ENCODE measurements at regions of chr12 and their contacts with region 1.

Region 1: DNA sequence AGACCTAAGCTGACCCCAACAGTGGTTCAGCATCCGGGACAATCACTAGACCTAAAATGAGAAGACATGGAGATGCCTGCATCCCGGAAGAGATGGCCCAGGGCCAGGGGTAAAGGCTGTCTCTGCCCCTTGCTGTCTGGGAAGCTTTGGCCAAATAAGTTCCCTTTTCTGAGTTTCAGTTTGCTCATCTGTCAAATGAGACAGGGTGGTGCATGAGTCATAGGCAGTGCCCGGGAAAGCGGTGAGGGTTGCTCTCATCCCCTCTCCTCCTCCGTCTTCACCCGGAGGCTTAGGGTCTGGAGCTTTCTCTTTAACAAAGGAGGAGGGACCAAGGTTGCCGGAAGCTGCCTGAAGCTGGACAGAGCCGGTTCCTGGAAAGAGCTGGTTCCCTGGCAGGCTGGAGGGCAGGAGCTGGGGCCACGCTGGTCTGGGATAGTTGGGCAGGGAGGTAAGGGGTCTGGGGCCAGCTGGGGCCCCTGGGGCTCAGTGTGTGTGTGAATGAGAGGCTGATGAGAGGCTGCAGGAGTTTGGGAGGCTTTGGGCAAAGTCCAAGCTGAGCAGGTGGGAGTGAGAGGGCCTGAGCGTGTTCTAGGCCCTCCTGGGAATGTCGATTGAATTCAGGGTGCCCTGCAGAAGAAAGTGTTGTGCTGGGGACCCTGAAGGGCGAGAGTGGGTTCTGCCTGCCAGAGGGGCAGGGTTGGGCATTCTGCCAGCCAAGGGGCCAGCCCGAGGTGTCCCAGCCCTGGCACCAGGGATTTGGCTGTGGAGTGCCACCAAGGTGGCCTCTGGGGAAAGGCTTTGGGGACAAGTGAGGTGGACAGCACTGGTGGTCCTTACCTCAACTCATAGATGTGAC is at the start of gene SDSL:
- DNase-seq: peak; percentile 66
- H3K4me3 Mint-ChIP-seq: no peak within 1 kb of the TSS
- H3K27ac Mint-ChIP-seq: no peak within 1 kb of the TSS
- H3K4me1 Mint-ChIP-seq: peaks cover 10% of the 10 kb centered on the region
- H3K27me3 Mint-ChIP-seq: peaks cover 3% of the 10 kb centered on the region
- total RNA-seq, gene SDSL: not detected

Region 2: GRCh38 chr12:113310489-113310888 is 111.8 kb before region 1 on chr12:
- CTCF ChIA-PET with region 1: interaction called, 9 read pairs
- intact Hi-C with region 1: loop called (anchors 1 kb)
- DNase-seq: no peak
- H3K4me3 Mint-ChIP-seq: no peak overlapping the region
- H3K27ac Mint-ChIP-seq: peak overlapping the region; percentile 16
- H3K4me1 Mint-ChIP-seq: peaks cover 2% of the 10 kb centered on the region
- H3K27me3 Mint-ChIP-seq: no peaks in the 10 kb centered on the region

Region 3: GRCh38 chr12:113334786-113335540 is 87.3 kb before region 1 on chr12 and contains the start of gene SLC8B1:
- CTCF ChIA-PET with region 1: interaction called, 3 read pairs
- intact Hi-C with region 1: loop called (anchors 5 kb)
- DNase-seq: peak; percentile 87
- H3K4me3 Mint-ChIP-seq: peak within 1 kb of the TSS; percentile 96
- H3K27ac Mint-ChIP-seq: peak within 1 kb of the TSS; percentile 84
- H3K4me1 Mint-ChIP-seq: peaks cover 34% of the 10 kb centered on the region
- H3K27me3 Mint-ChIP-seq: no peaks in the 10 kb centered on the region
- total RNA-seq, gene SLC8B1: 20.2 to 20.4 TPM

Region 4: DNA sequence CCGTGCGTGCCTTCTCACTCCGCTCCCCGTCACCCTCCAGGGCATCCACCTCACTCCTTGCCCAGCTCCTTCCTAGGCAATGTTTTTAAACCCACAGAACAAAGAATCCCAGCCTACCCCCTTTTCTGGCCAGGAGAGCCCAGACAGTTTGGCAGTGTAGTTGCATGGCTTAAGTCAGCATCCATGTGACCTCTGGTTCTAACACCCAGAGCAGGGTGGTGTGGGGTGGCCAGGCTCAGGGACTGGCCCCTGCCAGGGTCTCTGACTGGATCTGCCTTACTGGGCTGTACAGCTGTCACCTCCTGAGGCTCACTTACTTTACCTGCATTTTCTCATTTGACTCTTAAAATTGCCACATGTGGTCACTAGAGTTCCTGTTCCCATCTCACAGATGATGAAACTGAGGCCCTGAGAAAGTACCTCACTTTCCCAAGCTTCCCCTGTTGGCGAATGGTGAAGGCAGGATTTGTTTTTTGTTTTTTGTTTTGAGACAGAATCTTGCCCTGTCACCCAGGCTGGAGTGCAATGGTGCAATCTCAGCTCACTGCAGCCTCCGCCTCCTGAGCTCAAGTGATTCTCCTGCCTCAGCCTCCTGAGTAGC is 36.9 kb before region 1 on chr12:
- CTCF ChIA-PET with region 1: no interaction called
- intact Hi-C with region 1: no loop called
- DNase-seq: no peak
- H3K4me3 Mint-ChIP-seq: no peak overlapping the region
- H3K27ac Mint-ChIP-seq: no peak overlapping the region
- H3K4me1 Mint-ChIP-seq: no peaks in the 10 kb centered on the region
- H3K27me3 Mint-ChIP-seq: no peaks in the 10 kb centered on the region

Region 5: GRCh38 chr12:113407931-113408600 is 14.2 kb before region 1 on chr12:
- CTCF ChIA-PET with region 1: interaction called, 12 read pairs
- intact Hi-C with region 1: no loop called
- DNase-seq: no peak
- H3K4me3 Mint-ChIP-seq: no peak overlapping the region
- H3K27ac Mint-ChIP-seq: no peak overlapping the region
- H3K4me1 Mint-ChIP-seq: no peaks in the 10 kb centered on the region
- H3K27me3 Mint-ChIP-seq: peaks cover 2% of the 10 kb centered on the region